Esophagus muscularis mucosa (tissue), 4 donors: ENCODE measurements at regions of chr4 and their contacts with region 1.

Region 1: DNA sequence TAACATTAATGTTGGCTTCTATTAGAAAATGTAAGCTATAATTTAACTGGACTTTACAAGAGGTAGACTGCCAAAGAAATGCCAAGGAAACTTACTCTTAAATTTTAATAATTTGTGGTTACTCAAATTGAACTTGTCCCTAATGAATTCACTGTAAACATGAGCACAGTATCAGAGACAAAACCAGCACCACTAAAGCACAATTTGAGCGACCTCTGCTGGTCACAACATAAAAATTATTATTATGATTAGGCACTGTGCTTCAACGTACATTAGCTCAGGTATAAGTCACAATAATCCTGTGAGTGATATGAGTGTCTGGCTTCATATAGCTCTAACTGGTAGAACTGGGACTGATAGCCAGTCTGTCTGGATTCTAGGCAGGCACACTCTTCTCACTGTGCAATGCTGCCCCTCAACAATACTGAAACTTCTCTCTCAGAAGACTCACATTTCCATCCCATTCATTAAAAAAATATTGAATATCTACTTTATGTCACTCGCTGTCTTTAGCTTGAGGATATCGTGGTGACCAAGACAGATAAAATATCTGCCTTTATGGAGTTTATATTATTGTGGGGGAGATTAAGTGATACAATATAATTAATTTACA is 8.0 kb downstream of the NUDT6 start:
- DNase-seq: no peak
- H3K4me3 ChIP-seq: no peak overlapping the region
- H3K27ac ChIP-seq: no peak overlapping the region
- H3K4me1 ChIP-seq: peaks cover 0 to 7% (median 2%) of the 10 kb centered on the region in 4 donors
- H3K27me3 ChIP-seq: no peaks in the 10 kb centered on the region
- CTCF ChIP-seq: peak; percentile 29 to 51 (median 34)
- EP300 ChIP-seq: no peak
- POLR2A ChIP-seq: no peak

Region 2: GRCh38 chr4:122764821-122765215 is 149.6 kb before region 1 on chr4:
- intact Hi-C with region 1: loop called (anchors 5 kb)
- DNase-seq: no peak
- H3K4me3 ChIP-seq: no peak overlapping the region
- H3K27ac ChIP-seq: no peak overlapping the region
- H3K4me1 ChIP-seq: peaks cover 0 to 8% (median 5%) of the 10 kb centered on the region in 4 donors
- H3K27me3 ChIP-seq: no peaks in the 10 kb centered on the region
- CTCF ChIP-seq: no peak
- EP300 ChIP-seq: no peak
- POLR2A ChIP-seq: no peak